A549 (cell line): ENCODE measurements at regions of chr17 and their contacts with region 1.

Region 1: GRCh38 chr17:67824735-67825626 is at the start of gene BPTF:
- DNase-seq: peak; percentile 80 to 94
- ATAC-seq: peak; percentile 90 to 98
- H3K4me3 ChIP-seq: peak within 1 kb of the TSS; percentile 82
- H3K27ac ChIP-seq: peak within 1 kb of the TSS; percentile 92 to 96
- H3K4me1 ChIP-seq: peaks cover 27% of the 10 kb centered on the region; the same call in 2 of the 3 replicates
- CTCF ChIP-seq: peak; percentile 92
- EP300 ChIP-seq: no peak
- POLR2A ChIP-seq: peak; percentile 72
- RAD21 ChIP-seq: peak; percentile 47 to 64; a peak in 4 of 5 replicates
- polyA plus RNA-seq, gene BPTF: 60.7 and 74.9 TPM in 2 replicates

Region 2: GRCh38 chr17:67717624-67718329 is 107.2 kb before region 1 on chr17 and contains the start of gene NOL11:
- CTCF ChIA-PET with region 1: interaction called, 11 read pairs
- POLR2A ChIA-PET with region 1: interaction called, 4 read pairs
- DNase-seq: peak; percentile 97 to 100
- ATAC-seq: peak; percentile 99
- H3K4me3 ChIP-seq: peak within 1 kb of the TSS; percentile 73
- H3K27ac ChIP-seq: peak within 1 kb of the TSS; percentile 89 to 93
- H3K4me1 ChIP-seq: peaks cover 17% of the 10 kb centered on the region
- CTCF ChIP-seq: peak; percentile 89
- EP300 ChIP-seq: no peak
- POLR2A ChIP-seq: peak; percentile 91
- RAD21 ChIP-seq: peak; percentile 50 to 69
- polyA plus RNA-seq, gene NOL11: 105 and 118 TPM in 2 replicates

Region 3: GRCh38 chr17:67779098-67779672 is 45.8 kb before region 1 on chr17:
- CTCF ChIA-PET with region 1: interaction called, 15 read pairs
- POLR2A ChIA-PET with region 1: no interaction called
- DNase-seq: peak; percentile 66 to 86
- ATAC-seq: peak; percentile 98 to 99
- H3K4me3 ChIP-seq: peak overlapping the region; percentile 40
- H3K27ac ChIP-seq: peak overlapping the region; percentile 50 to 72
- H3K4me1 ChIP-seq: peaks cover 13% of the 10 kb centered on the region
- CTCF ChIP-seq: peak; percentile 81
- EP300 ChIP-seq: no peak
- POLR2A ChIP-seq: no peak
- RAD21 ChIP-seq: peak; percentile 59 to 63

Region 4: DNA sequence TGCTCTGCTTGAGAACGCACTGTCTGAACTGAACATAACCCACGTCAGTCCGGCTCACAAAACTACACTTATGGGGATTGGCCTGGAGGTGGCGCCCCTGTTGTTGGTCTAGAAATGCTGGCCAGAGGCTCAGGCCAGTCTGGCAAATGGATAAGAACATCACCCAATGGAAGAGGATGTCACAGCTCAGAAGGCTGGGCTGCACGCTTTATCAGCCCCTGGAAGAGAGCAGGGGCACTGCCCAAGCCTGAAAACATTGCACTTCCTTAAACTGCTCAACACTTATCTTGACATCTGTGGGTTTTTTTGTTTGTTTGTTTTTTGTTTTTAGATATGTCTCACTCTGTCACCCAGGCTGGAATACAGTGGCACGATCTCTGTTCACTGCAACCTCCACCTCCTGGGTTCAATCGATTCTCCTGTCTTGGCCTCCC is 24.5 kb before region 1 on chr17:
- CTCF ChIA-PET with region 1: interaction called, 92 read pairs
- POLR2A ChIA-PET with region 1: interaction called, 9 read pairs
- DNase-seq: peak; percentile 80 to 86
- ATAC-seq: peak; percentile 93 to 98
- H3K4me3 ChIP-seq: no peak overlapping the region
- H3K27ac ChIP-seq: no peak overlapping the region
- H3K4me1 ChIP-seq: no peaks in the 10 kb centered on the region
- CTCF ChIP-seq: peak; percentile 71
- EP300 ChIP-seq: no peak
- POLR2A ChIP-seq: no peak
- RAD21 ChIP-seq: peak; percentile 71 to 93

Region 5: DNA sequence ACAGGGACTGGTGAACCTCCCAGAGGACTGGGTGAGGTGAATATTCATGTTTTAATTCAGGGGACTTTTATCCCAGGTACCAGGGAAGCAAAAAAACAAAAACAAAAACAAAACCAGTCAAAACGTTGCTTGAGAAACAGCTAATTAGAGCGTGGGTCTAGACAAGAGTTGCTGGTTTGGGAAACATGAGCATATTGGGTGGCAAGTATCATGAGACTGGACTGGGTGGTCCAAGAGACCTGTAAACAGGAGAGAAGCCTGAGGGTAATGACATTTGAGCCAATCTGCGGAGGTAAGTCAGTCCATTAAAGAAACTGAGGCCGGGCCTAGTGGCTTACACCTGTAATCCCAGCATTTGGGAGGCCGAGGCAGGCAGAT is 11.2 kb before region 1 on chr17:
- CTCF ChIA-PET with region 1: interaction called, 17 read pairs
- POLR2A ChIA-PET with region 1: no interaction called
- DNase-seq: no peak
- ATAC-seq: no peak
- H3K4me3 ChIP-seq: no peak overlapping the region
- H3K27ac ChIP-seq: no peak overlapping the region; a peak in 1 of 6 replicates
- H3K4me1 ChIP-seq: no peaks in the 10 kb centered on the region
- CTCF ChIP-seq: no peak
- EP300 ChIP-seq: no peak
- POLR2A ChIP-seq: no peak
- RAD21 ChIP-seq: no peak

Region 6: DNA sequence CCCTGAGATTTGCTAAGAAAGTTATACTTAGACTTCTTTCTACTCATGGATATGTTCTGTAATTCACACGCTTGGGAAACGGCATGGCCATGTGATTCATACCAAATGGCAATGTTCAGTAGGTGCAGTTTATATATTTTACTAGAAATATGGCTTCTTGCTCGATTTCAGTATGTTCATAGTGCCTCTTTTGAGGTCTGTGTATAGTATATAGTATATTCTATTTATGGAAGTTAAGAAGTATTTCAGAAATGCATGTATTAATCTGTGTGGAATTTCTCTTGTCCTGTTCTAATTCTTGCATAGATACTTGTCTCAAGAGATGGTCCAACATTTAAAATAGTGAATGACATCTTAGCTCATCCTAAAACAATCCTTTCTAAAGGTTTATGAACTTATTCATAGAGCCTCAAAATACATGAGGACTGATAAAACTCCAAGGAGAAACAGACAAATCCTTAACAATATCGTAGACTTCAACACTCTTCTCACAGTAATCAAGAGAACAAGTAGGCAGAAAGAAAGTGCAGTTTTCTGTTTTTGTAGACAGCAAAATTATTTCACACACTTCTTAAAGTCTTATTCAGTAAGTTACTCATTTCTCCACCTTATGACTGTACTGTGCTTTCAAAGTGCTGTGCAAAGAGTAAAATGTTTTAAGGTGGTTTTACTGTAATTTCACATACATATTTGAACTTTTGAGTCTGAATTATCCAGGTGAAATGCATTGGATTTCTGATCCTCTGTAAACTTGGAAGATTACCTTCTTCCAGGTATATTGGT is 11.4 kb after region 1 on chr17:
- CTCF ChIA-PET with region 1: interaction called, 11 read pairs
- POLR2A ChIA-PET with region 1: no interaction called
- DNase-seq: no peak
- ATAC-seq: peak; percentile 35 to 50; a peak in 4 of 6 replicates
- H3K4me3 ChIP-seq: no peak overlapping the region
- H3K27ac ChIP-seq: no peak overlapping the region
- H3K4me1 ChIP-seq: peaks cover 25% of the 10 kb centered on the region
- CTCF ChIP-seq: no peak
- EP300 ChIP-seq: no peak
- POLR2A ChIP-seq: no peak
- RAD21 ChIP-seq: no peak